Psoas muscle (tissue), 8 donors: ENCODE measurements at regions of chr12 and their contacts with region 1.

Region 1: GRCh38 chr12:54359033-54359761 is 5.1 kb downstream of the GPR84 start:
- DNase-seq: peak; percentile 96 to 98
- ATAC-seq: peak; percentile 95
- H3K4me3 ChIP-seq: peak overlapping the region; percentile 65
- H3K27ac ChIP-seq: peak overlapping the region; percentile 89
- H3K4me1 ChIP-seq: peaks cover 14% of the 10 kb centered on the region
- H3K27me3 ChIP-seq: no peaks in the 10 kb centered on the region
- CTCF ChIP-seq: no peak

Region 2: DNA sequence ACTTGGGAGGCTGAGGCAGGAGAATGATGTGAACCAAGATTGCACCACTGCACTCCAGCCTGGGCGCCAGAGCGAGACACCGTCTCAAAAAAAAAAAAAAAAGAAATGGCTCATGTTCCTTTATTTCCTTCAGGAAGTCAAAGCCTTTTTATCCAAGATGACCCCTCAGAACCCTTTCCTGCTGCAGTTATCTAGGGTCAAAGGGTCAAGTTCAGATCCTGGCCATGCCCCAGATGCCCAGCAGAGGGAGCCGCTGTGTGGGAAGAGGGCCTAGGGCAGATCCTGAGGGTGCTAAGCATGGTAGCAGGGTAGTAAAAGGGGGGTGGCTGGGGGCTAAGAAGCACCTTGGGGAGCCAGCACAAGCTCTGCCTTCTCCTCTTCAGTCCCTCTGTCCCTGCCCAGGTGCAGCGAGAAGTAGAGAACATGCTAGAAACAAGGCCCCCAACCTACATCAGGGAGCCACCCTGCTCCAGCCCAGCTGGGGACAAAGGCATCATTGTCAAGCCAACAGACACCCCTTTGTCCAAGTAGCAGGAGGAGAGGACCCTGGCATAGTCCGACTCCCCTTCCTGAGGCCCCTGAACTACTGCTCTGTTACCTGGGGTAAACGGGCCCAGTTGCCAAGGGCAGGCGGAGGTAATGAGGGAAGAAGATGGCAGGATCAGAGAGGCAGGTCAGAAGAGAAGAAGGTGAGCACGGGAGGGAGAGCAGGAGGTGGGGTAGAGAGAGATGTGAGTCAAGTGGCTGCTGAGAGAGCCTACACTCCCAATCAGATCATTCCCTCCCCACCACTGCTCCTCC is 64.8 kb before region 1 on chr12:
- intact Hi-C with region 1: loop called (anchors 5 kb)
- DNase-seq: peak; percentile 45 to 82
- ATAC-seq: peak; percentile 71 to 82 (median 78)
- H3K4me3 ChIP-seq: no peak overlapping the region
- H3K27ac ChIP-seq: no peak overlapping the region
- H3K4me1 ChIP-seq: peaks cover under 1% of the 10 kb centered on the region
- H3K27me3 ChIP-seq: no peaks in the 10 kb centered on the region
- CTCF ChIP-seq: peak; percentile 62